Activated naive CD4-positive, alpha-beta T cell treated with anti-CD3 and anti-CD28 coated beads for 36 hours (primary cell): ENCODE measurements at regions of chr15 and their contacts with region 1.

Region 1: DNA sequence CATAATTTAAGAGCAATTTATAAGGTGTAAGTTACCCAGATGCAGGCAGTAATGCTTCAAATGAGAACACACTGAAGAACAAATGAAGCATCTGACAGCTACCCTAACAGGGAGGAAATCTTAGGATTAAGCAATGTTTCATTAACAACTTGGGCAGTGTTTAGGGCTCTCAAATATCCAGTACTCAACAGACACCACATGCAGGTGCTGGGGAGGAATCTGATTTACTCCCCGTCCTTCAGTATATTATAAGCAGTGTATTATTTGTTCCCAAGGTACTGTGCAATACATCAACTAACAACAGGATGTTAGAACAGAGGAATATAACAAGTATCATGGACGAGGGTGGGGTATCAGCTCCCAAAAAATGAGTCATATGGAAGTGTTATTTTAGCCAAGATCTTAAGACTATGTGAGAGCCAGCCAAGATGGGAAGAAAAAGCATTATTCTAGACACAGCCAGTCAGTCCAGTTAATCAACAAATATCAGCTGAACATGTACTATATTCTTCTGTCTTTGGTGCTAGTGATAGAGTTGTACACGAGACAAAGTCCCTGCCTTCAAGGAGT is 20.4 kb downstream of the BTBD1 start:
- DNase-seq: no peak
- H3K4me3 Mint-ChIP-seq: no peak overlapping the region
- H3K27ac Mint-ChIP-seq: no peak overlapping the region
- H3K4me1 Mint-ChIP-seq: peaks cover 2% of the 10 kb centered on the region
- H3K27me3 Mint-ChIP-seq: no peaks in the 10 kb centered on the region

Region 2: DNA sequence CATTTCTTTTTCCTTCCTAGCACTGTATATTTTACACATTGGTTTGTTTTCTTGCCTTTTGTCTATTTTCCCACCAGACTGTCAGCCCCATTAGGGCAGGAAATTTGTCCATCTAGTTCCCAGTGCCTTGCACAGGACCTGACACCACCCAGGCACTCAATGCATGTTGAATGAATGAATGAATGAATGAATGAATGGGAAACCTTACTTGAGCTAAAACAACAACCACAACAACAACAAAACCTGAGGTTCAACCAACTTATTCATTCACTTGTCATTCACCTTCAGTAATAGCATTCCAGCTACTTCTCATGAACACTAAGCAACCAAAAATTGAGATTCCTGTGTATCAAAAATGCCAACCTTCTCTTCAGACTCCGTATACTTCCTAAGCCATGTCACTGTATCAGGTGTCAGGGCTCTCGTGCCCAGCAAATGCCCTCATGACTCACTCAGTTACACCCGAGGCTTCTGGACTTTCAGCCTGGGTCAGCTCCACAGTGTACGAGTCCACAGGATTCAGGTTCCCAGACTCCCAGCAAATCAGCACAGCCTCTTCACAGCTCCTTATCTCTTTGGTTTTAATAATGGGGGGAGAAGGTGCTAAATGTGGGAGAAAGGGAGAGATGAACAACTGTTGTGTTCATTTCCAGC is 278.1 kb before region 1 on chr15:
- CTCF ChIA-PET with region 1: no interaction called
- intact Hi-C with region 1: no loop called
- DNase-seq: no peak
- H3K4me3 Mint-ChIP-seq: no peak overlapping the region
- H3K27ac Mint-ChIP-seq: no peak overlapping the region
- H3K4me1 Mint-ChIP-seq: peaks cover under 1% of the 10 kb centered on the region
- H3K27me3 Mint-ChIP-seq: peaks cover 4% of the 10 kb centered on the region

Region 3: DNA sequence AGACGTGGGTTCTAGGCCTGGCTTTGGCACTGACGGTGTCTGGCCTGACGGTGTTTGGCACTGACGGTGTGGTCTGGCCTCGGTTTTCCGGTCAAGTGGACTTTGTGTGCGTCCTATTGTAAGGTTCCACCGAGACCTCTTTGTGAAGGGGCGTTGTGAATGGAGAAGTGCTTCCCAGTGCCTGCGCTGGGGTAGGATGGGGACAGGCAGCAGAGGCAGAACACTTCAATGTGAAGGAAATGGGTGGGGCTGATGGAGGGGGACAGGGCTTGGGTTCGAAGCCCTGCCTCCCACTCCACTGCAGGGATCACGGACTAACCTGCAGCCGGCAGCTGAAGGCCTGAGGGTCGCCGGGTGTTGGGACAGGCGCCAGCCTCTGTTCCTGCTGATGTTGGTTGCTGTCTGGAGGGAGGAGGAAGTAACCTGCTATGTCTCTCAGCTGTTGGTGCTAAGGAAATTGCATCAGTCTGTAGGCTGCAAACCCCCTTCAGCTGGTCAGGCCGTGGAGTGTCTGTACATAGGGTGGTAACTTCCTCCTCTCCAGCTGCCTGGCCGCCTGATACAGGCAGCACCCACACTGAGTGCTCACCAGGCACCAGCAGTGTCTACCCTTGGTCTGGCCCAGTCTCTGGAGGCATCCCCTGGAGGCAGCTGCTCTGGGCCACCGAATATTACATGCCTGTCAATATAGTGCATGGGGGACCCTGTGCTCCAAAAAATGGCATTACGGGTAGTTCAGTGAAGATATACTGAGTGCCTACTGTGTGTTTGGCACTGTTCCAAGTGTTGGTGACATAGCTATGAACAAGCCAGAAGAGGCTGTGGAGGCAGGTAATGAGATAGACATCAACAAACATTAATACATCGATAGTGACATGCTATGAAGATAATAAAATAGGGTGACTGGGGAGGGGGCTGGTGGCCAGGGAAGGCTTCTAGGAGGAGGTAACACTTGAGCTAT is 61.9 kb after region 1 on chr15:
- CTCF ChIA-PET with region 1: no interaction called
- intact Hi-C with region 1: loop called (anchors 10 kb)
- DNase-seq: peak; percentile 39
- H3K4me3 Mint-ChIP-seq: peak overlapping the region; percentile 81
- H3K27ac Mint-ChIP-seq: no peak overlapping the region
- H3K4me1 Mint-ChIP-seq: peaks cover 16% of the 10 kb centered on the region
- H3K27me3 Mint-ChIP-seq: peaks cover 58% of the 10 kb centered on the region

Region 4: GRCh38 chr15:83164111-83164770 is 117.6 kb after region 1 on chr15:
- CTCF ChIA-PET with region 1: no interaction called
- intact Hi-C with region 1: no loop called
- DNase-seq: no peak
- H3K4me3 Mint-ChIP-seq: no peak overlapping the region
- H3K27ac Mint-ChIP-seq: no peak overlapping the region
- H3K4me1 Mint-ChIP-seq: peaks cover 14% of the 10 kb centered on the region
- H3K27me3 Mint-ChIP-seq: peaks cover 29% of the 10 kb centered on the region